ENCODE measurements at regions of chr1 and their contacts with region 1.

Region 1: GRCh38 chr1:65687428-65688214 is 105.1 kb upstream of the PDE4B start:
- DNase-seq: peak; percentile 81 to 88
- ATAC-seq: peak; percentile 68 to 95 (median 90)
- H3K4me3 ChIP-seq: no peak overlapping the region
- H3K27ac ChIP-seq: peak overlapping the region in 1 of 10 donors; percentile 31
- H3K4me1 ChIP-seq: peaks cover 0 to 33% (median 26%) of the 10 kb centered on the region in 9 donors
- H3K27me3 ChIP-seq: peaks cover 0 to 7% (median 0%) of the 10 kb centered on the region in 7 donors
- CTCF ChIP-seq: peak; percentile 91 to 99 (median 96)

Region 2: DNA sequence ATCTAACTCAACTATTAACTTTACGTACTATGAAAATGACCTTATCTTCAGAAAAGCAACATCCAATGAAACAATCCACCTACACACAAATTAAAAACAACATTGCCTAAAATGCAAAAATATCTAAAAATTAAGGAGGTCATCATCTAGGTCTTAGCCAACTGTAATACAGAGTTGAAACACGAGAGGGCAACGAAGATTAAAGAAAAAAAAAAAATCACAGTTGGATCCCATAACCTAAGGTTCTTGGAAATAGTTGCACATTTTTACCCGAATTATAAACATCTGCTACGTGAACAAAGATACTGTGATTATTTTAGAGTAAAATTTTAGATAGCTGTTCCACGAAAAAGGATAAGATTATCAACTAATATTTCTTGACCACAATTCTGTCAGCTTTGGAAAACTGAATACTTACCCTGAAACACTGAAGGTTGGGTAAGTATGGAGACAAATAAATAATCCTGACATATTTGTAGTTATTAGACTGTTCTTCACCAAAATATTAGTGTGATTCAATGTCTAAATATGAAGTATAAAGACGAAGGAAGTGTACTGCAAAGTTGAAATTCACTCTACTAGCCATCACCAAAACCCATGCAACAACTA is 627.6 kb before region 1 on chr1:
- intact Hi-C with region 1: loop called in 4 of 10 experiments (anchors 2 to 10 kb)
- DNase-seq: no peak
- ATAC-seq: peak in 3 of 8 donors; percentile 25 to 55 (median 34)
- H3K4me3 ChIP-seq: no peak overlapping the region
- H3K27ac ChIP-seq: peak overlapping the region in 4 of 10 donors; percentile 1 to 34 (median 4)
- H3K4me1 ChIP-seq: peaks cover 16 to 94% (median 76%) of the 10 kb centered on the region in 9 donors
- H3K27me3 ChIP-seq: no peaks in the 10 kb centered on the region
- CTCF ChIP-seq: peak; percentile 25 to 78 (median 67)

Region 3: DNA sequence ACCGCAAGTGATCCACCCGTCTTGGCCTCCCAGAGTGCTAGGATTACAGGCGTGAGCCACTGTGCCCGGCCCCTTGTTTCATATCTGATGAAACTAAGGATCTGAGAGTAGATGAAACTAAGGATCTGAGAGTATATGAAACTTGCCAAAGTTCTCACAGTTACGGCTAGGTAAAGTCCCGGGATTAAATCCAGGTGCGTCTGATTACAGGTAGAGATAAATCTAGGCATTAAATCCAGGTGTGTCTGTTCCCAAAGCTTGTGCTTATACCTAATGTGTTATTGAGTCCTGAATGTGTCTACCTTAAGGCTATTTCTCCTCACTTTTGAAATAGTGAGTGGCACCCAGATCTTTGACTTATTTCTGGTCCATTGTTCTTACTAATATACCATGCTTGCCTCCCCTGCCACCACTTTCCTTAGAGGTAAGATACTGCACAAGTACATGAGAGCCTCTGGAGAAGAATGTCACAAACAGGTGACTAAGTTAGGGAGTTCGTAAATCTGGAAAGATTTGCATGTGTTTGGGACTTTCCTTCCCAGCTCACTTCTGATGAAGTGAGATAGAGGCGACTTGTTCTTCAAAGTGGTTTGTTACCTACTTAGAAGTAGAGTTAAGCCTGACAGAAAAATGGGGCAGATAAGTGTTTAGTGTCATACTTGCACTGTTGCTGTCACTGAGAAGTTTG is 473.1 kb before region 1 on chr1:
- intact Hi-C with region 1: loop called in 1 of 10 experiments (anchors 1 kb)
- DNase-seq: no peak
- ATAC-seq: no peak
- H3K4me3 ChIP-seq: no peak overlapping the region
- H3K27ac ChIP-seq: no peak overlapping the region
- H3K4me1 ChIP-seq: peaks cover 0 to 15% (median 2%) of the 10 kb centered on the region in 9 donors
- H3K27me3 ChIP-seq: no peaks in the 10 kb centered on the region
- CTCF ChIP-seq: no peak

Region 4: DNA sequence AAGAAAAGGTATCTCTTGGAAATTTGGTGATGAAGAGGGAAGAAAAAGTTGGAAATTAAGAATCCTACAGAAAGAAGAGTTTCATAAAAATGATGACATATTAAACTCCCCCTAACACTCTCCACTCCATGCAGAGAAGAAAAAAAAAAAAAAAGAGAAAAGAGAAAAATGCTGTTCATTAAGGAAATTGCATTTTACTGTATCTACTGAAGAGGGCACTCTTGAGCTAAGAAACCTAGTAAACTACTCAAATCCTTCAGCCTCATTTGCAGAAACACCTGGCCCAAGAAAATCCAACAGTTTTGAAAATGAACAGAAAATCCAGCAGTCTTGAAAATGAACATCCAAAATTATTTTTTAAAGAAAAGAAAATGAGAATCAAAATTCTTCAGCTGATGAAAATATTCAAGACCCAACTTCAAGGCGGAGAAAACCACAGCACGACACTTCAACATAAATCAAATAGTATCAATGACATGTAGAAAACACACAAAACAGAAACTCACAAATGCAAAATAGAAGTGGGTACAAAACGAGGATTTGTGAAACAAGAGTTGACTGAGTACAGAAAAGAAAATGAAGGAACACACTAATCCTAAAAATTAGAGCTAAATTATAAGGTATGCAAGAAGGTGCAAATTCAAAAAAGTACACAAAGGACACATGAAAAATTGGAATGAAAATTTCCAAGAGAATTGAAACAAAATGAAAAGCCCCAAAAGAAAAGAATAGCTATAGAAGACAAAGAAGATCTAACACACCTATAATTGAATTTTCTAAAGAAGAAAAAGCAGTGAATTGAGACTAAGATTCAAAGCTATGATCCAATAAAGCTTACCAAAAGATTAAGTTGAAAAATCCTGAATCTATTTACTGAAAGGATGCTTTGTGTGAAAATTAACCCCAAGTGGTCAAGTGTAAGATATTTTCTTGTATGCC is 451.5 kb before region 1 on chr1:
- intact Hi-C with region 1: loop called (anchors 1 to 5 kb)
- DNase-seq: no peak
- ATAC-seq: no peak
- H3K4me3 ChIP-seq: no peak overlapping the region
- H3K27ac ChIP-seq: no peak overlapping the region
- H3K4me1 ChIP-seq: peaks cover 0 to 14% (median 0%) of the 10 kb centered on the region in 9 donors
- H3K27me3 ChIP-seq: no peaks in the 10 kb centered on the region
- CTCF ChIP-seq: peak; percentile 37 to 70 (median 60)

Region 5: DNA sequence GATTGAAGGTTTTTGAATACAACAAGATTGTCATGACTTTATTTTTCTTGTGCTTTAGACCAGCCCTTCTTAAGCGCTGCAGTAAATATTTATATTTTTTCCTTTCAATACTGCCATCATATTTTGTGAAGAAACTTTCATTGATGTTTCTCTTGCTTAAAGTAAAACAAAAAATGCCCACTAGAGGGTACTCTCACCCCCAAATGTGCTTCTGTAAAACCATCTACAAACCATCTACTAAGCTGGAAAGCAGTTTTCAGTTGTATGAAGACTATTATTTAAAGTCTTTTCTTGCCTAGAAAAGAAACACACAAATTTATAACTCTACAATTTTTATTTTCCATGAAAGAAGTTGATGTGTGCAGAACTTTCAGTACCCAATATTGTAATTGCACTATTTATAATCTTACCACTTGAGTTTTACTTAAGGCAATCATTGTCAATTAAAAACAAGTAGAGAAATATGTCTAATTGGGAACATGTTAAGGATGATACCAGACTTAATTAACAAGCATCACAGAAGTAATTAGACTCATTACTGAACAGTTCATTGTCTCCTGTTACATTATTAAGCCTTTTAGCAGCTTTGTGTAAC is 256.4 kb before region 1 on chr1:
- intact Hi-C with region 1: loop called in 6 of 10 experiments (anchors 2 to 10 kb)
- DNase-seq: no peak
- ATAC-seq: peak in 2 of 8 donors; percentile 51 to 57
- H3K4me3 ChIP-seq: no peak overlapping the region
- H3K27ac ChIP-seq: peak overlapping the region in 7 of 10 donors; percentile 5 to 84 (median 65)
- H3K4me1 ChIP-seq: peaks cover 0 to 40% (median 17%) of the 10 kb centered on the region in 9 donors
- H3K27me3 ChIP-seq: no peaks in the 10 kb centered on the region
- CTCF ChIP-seq: peak; percentile 33 to 77 (median 64)